CD4-positive, alpha-beta memory T cell (primary cell): ENCODE measurements at regions of chr15 and their contacts with region 1.

Region 1: DNA sequence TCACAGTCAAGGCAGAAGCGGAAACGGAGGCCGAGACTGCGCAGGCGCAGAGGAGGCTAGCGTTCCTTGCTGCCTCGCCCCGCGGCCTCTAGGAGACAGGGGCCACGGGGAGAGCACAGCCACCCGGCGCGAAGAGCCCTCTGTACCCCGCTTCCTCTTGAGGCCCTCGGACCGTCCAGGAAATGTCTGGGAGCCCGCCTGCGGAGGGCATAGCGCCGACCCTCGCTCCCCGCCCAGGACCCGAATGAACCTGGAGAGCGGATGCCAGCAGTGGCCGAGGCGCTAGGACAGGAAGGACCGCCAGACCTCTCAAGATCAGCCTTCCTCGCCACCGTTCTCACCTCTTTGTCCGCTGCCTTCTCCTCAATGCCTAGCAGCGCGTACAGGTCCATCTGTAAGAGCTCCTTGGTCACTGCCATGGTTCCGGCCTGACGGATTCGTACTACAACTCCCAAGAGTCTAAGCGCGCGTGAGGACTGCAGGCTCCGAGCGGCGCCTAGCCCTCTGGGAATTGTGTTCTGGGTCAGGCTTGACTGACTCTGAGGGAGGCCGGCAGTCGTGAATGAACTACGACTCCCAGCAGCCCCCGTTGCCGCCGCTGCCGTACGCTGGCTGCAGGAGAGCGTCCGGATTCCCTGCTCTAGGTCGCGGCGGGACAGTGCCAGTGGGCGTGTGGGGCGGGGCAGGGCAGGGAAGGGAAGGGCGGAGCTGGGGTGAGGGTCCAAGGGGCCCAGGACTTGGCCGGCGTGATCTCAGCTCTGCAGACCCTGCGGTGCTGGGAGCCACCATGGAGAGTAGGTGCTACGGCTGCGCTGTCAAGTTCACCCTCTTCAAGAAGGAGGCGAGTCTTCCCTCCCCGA is at the starts of genes DNAJC17 and ZFYVE19:
- DNase-seq: peak; percentile 90 to 97 (median 91)
- H3K4me3 ChIP-seq: peak within 1 kb of the TSS; percentile 95 to 100
- H3K4me3 Mint-ChIP-seq: peak within 1 kb of the TSS; percentile 96 to 100 (median 98)
- H3K27ac ChIP-seq: peak within 1 kb of the TSS; percentile 97
- H3K27ac Mint-ChIP-seq: peak within 1 kb of the TSS; percentile 92 to 100 (median 98)
- H3K4me1 ChIP-seq: peaks cover 20% of the 10 kb centered on the region
- H3K4me1 Mint-ChIP-seq: peaks cover 15 to 33% (median 22%) of the 10 kb centered on the region in 4 donors
- H3K27me3 ChIP-seq: no peaks in the 10 kb centered on the region
- H3K27me3 Mint-ChIP-seq: no peaks in the 10 kb centered on the region
- total RNA-seq, gene DNAJC17: 40.5 to 43.9 TPM
- total RNA-seq, gene ZFYVE19: 34.1 to 35.0 TPM

Region 2: DNA sequence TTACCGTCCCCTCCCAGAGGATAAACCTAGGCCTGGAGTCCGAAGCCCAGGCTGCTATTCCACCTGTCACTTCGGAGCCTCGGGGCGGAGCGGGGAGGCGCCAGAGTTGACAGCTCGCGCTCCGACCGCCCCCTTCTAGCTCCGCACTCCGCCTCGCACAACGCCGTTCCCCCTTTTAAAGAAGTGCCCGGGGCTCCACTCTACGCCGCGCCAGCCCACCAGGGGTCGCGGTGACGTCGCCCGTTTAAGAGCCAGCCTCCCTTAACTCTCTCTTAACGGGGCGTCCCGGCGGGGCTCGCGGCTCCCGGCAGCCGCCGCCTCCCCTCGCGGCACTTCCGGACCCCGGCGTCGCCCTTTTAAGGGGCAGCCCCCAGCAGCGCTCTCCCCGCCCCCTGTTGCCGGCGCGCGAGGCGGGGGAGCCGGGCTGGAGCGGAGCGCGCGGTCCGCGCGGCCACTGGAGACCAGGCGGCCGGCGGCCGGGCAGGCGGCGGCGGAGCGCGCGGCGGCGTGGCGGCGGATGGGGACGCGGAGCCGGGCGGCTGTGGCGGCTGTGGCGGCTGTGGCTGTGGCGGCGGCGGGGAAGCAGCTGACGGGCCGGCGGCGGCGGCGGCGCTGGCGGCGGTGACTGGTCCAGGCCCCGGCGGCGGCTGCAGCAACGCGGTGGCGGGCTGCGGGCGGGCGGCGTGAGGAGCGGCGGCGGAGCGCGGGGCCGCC is 483.9 kb before region 1 on chr15 and contains the start of gene INAFM2:
- CTCF ChIA-PET with region 1: no interaction called
- POLR2A ChIA-PET with region 1: no interaction called
- intact Hi-C with region 1: loop called (anchors 5 kb)
- DNase-seq: peak; percentile 88 to 90 (median 89)
- H3K4me3 ChIP-seq: peak within 1 kb of the TSS in 1 of 2 donors; percentile 56
- H3K4me3 Mint-ChIP-seq: peak within 1 kb of the TSS; percentile 79 to 89 (median 86)
- H3K27ac ChIP-seq: peak within 1 kb of the TSS; percentile 29
- H3K27ac Mint-ChIP-seq: peak within 1 kb of the TSS; percentile 36 to 93 (median 88)
- H3K4me1 ChIP-seq: peaks cover 22% of the 10 kb centered on the region
- H3K4me1 Mint-ChIP-seq: peaks cover 16 to 35% (median 25%) of the 10 kb centered on the region in 4 donors
- H3K27me3 ChIP-seq: no peaks in the 10 kb centered on the region
- H3K27me3 Mint-ChIP-seq: peaks cover 0 to 7% of the 10 kb centered on the region in 2 donors
- total RNA-seq, gene INAFM2: 7.2 to 7.5 TPM

Region 3: GRCh38 chr15:40564591-40565332 is 242.5 kb before region 1 on chr15 and contains the start of gene CCDC32:
- CTCF ChIA-PET with region 1: no interaction called
- POLR2A ChIA-PET with region 1: interaction called, 4 read pairs
- intact Hi-C with region 1: loop called (anchors 1 kb)
- DNase-seq: peak; percentile 93 to 98 (median 96)
- H3K4me3 ChIP-seq: peak within 1 kb of the TSS; percentile 97 to 98
- H3K4me3 Mint-ChIP-seq: peak within 1 kb of the TSS; percentile 95 to 98 (median 97)
- H3K27ac ChIP-seq: peak within 1 kb of the TSS; percentile 92
- H3K27ac Mint-ChIP-seq: peak within 1 kb of the TSS; percentile 89 to 99 (median 98)
- H3K4me1 ChIP-seq: peaks cover 34% of the 10 kb centered on the region
- H3K4me1 Mint-ChIP-seq: peaks cover 26 to 65% (median 42%) of the 10 kb centered on the region in 4 donors
- H3K27me3 ChIP-seq: no peaks in the 10 kb centered on the region
- H3K27me3 Mint-ChIP-seq: no peaks in the 10 kb centered on the region
- total RNA-seq, gene CCDC32: 31.7 to 32.4 TPM

Region 4: GRCh38 chr15:40754883-40755811 is 52.1 kb before region 1 on chr15 and contains the start of gene RMDN3:
- CTCF ChIA-PET with region 1: no interaction called
- POLR2A ChIA-PET with region 1: no interaction called
- intact Hi-C with region 1: loop called (anchors 1 kb)
- DNase-seq: peak; percentile 90 to 93 (median 92)
- H3K4me3 ChIP-seq: peak within 1 kb of the TSS; percentile 65 to 96
- H3K4me3 Mint-ChIP-seq: peak within 1 kb of the TSS; percentile 91 to 99 (median 94)
- H3K27ac ChIP-seq: peak within 1 kb of the TSS; percentile 85
- H3K27ac Mint-ChIP-seq: peak within 1 kb of the TSS; percentile 82 to 98 (median 95)
- H3K4me1 ChIP-seq: peaks cover 31% of the 10 kb centered on the region
- H3K4me1 Mint-ChIP-seq: peaks cover 11 to 40% (median 26%) of the 10 kb centered on the region in 4 donors
- H3K27me3 ChIP-seq: no peaks in the 10 kb centered on the region
- H3K27me3 Mint-ChIP-seq: no peaks in the 10 kb centered on the region
- total RNA-seq, gene RMDN3: 24.5 to 26.7 TPM

Region 5: GRCh38 chr15:40763801-40764732 is 43.2 kb before region 1 on chr15 and contains the start of gene GCHFR:
- CTCF ChIA-PET with region 1: no interaction called
- POLR2A ChIA-PET with region 1: no interaction called
- intact Hi-C with region 1: loop called (anchors 2 kb)
- DNase-seq: peak; percentile 63 to 74 (median 71)
- H3K4me3 ChIP-seq: peak within 1 kb of the TSS; percentile 61 to 81
- H3K4me3 Mint-ChIP-seq: peak within 1 kb of the TSS; percentile 87 to 93 (median 90)
- H3K27ac ChIP-seq: peak within 1 kb of the TSS; percentile 64
- H3K27ac Mint-ChIP-seq: peak within 1 kb of the TSS; percentile 85 to 96 (median 93)
- H3K4me1 ChIP-seq: peaks cover 28% of the 10 kb centered on the region
- H3K4me1 Mint-ChIP-seq: peaks cover 12 to 34% (median 24%) of the 10 kb centered on the region in 4 donors
- H3K27me3 ChIP-seq: no peaks in the 10 kb centered on the region
- H3K27me3 Mint-ChIP-seq: no peaks in the 10 kb centered on the region
- total RNA-seq, gene GCHFR: 21.2 to 24.1 TPM

Region 6: GRCh38 chr15:40782580-40783227 is 24.6 kb before region 1 on chr15:
- CTCF ChIA-PET with region 1: interaction called, 7 read pairs
- POLR2A ChIA-PET with region 1: no interaction called
- intact Hi-C with region 1: loop called (anchors 2 kb)
- DNase-seq: peak; percentile 74 to 79 (median 75)
- H3K4me3 ChIP-seq: no peak overlapping the region
- H3K4me3 Mint-ChIP-seq: no peak overlapping the region
- H3K27ac ChIP-seq: no peak overlapping the region
- H3K27ac Mint-ChIP-seq: peak overlapping the region in 3 of 7 donors; percentile 23 to 73 (median 70)
- H3K4me1 ChIP-seq: peaks cover 12% of the 10 kb centered on the region
- H3K4me1 Mint-ChIP-seq: peaks cover 13 to 24% (median 17%) of the 10 kb centered on the region in 4 donors
- H3K27me3 ChIP-seq: no peaks in the 10 kb centered on the region
- H3K27me3 Mint-ChIP-seq: no peaks in the 10 kb centered on the region

Region 7: DNA sequence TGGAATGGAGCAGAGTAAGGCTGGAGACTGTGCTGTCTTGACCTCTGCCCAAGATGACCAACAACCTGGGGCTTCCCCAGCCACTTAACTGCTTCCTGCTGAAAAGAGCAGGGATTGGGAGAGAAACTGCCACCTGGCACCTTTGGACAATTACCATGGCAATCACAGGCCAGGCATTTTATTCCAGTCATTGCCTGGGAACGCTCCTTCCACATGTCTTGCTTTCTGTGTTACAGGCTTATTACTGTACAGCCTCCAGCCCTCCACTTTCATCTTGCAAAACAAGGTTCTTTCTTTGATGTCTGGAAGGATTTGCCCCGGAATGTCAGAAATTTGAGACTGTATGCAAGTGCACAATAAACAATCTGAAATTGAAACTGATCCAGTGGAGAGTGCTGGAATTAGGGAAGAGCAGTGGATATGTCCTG is 18.4 kb after region 1 on chr15:
- CTCF ChIA-PET with region 1: no interaction called
- POLR2A ChIA-PET with region 1: no interaction called
- intact Hi-C with region 1: no loop called
- DNase-seq: no peak
- H3K4me3 ChIP-seq: no peak overlapping the region
- H3K4me3 Mint-ChIP-seq: no peak overlapping the region
- H3K27ac ChIP-seq: no peak overlapping the region
- H3K27ac Mint-ChIP-seq: no peak overlapping the region
- H3K4me1 ChIP-seq: no peaks in the 10 kb centered on the region
- H3K4me1 Mint-ChIP-seq: no peaks in the 10 kb centered on the region
- H3K27me3 ChIP-seq: no peaks in the 10 kb centered on the region
- H3K27me3 Mint-ChIP-seq: peaks cover 0 to 2% of the 10 kb centered on the region in 2 donors

Region 8: GRCh38 chr15:40835948-40836347 is 28.7 kb after region 1 on chr15:
- CTCF ChIA-PET with region 1: no interaction called
- POLR2A ChIA-PET with region 1: no interaction called
- intact Hi-C with region 1: no loop called
- DNase-seq: no peak
- H3K4me3 ChIP-seq: no peak overlapping the region
- H3K4me3 Mint-ChIP-seq: no peak overlapping the region
- H3K27ac ChIP-seq: no peak overlapping the region
- H3K27ac Mint-ChIP-seq: no peak overlapping the region
- H3K4me1 ChIP-seq: no peaks in the 10 kb centered on the region
- H3K4me1 Mint-ChIP-seq: no peaks in the 10 kb centered on the region
- H3K27me3 ChIP-seq: no peaks in the 10 kb centered on the region
- H3K27me3 Mint-ChIP-seq: no peaks in the 10 kb centered on the region